ENCODE measurements at regions of chr9 and their contacts with region 1.

Region 1: GRCh38 chr9:31412081-31412480 is 972.4 kb upstream of the ACO1 start:
- DNase-seq: no peak
- ATAC-seq: no peak
- H3K4me3 ChIP-seq: no peak overlapping the region
- H3K27ac ChIP-seq: no peak overlapping the region
- H3K4me1 ChIP-seq: no peaks in the 10 kb centered on the region
- H3K27me3 ChIP-seq: no peaks in the 10 kb centered on the region
- CTCF ChIP-seq: no peak
- POLR2A ChIP-seq: no peak

Region 2: GRCh38 chr9:31347082-31347617 is 64.9 kb before region 1 on chr9:
- intact Hi-C with region 1: loop called in 1 of 10 experiments (anchors 10 kb)
- DNase-seq: no peak
- ATAC-seq: peak in 3 of 4 donors; percentile 46 to 74 (median 47)
- H3K4me3 ChIP-seq: peak overlapping the region in 9 of 12 donors; percentile 4 to 42 (median 28)
- H3K27ac ChIP-seq: peak overlapping the region in 9 of 12 donors; percentile 20 to 85 (median 29)
- H3K4me1 ChIP-seq: peaks cover 0 to 10% (median 0%) of the 10 kb centered on the region in 12 donors
- H3K27me3 ChIP-seq: no peaks in the 10 kb centered on the region
- CTCF ChIP-seq: no peak
- POLR2A ChIP-seq: no peak

Region 3: GRCh38 chr9:31467086-31467485 is 55.0 kb after region 1 on chr9:
- intact Hi-C with region 1: loop called in 1 of 10 experiments (anchors 10 kb)
- DNase-seq: no peak
- ATAC-seq: no peak
- H3K4me3 ChIP-seq: no peak overlapping the region
- H3K27ac ChIP-seq: no peak overlapping the region
- H3K4me1 ChIP-seq: no peaks in the 10 kb centered on the region
- H3K27me3 ChIP-seq: no peaks in the 10 kb centered on the region
- CTCF ChIP-seq: no peak
- POLR2A ChIP-seq: no peak

Measured in heart left ventricle (tissue), 16 donors.